ENCODE measurements at regions of chr1 and their contacts with region 1.

Region 1: GRCh38 chr1:211944733-211945500 is 90.4 kb downstream of the INTS7 start:
- DNase-seq: peak; percentile 96
- H3K4me3 Mint-ChIP-seq: peak overlapping the region; percentile 3
- H3K27ac Mint-ChIP-seq: peak overlapping the region; percentile 21
- H3K4me1 Mint-ChIP-seq: peaks cover 14% of the 10 kb centered on the region
- H3K27me3 Mint-ChIP-seq: no peaks in the 10 kb centered on the region
- CTCF ChIP-seq: peak; percentile 96

Region 2: GRCh38 chr1:211680752-211681327 is 264.1 kb before region 1 on chr1:
- CTCF ChIA-PET with region 1: interaction called, 151 read pairs
- POLR2A ChIA-PET with region 1: interaction called, 12 read pairs
- intact Hi-C with region 1: loop called (anchors 1 kb)
- DNase-seq: peak; percentile 92
- H3K4me3 Mint-ChIP-seq: no peak overlapping the region
- H3K27ac Mint-ChIP-seq: peak overlapping the region; percentile 24
- H3K4me1 Mint-ChIP-seq: peaks cover 8% of the 10 kb centered on the region
- H3K27me3 Mint-ChIP-seq: no peaks in the 10 kb centered on the region
- CTCF ChIP-seq: peak; percentile 99

Region 3: DNA sequence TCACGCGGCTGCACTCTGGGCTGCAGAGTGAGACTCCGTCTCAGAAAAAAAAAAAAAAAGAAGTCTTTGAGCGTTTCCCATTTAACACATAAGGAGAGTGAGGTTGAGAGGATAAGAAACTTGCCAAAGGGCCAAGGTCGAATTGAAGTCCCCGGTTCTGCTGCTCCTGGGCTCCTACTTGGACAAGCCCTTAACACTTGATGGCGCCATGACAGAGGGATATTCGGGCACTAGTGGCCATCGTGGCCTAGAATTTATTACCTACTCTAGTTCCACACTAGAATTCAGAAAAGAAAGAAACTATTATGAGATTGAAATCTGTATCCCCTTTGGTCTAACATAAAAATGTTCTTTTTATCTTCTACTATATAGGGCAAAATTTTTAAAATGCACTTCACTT is 203.8 kb before region 1 on chr1:
- CTCF ChIA-PET with region 1: interaction called, 16 read pairs
- POLR2A ChIA-PET with region 1: interaction called, 3 read pairs
- intact Hi-C with region 1: no loop called
- DNase-seq: peak; percentile 31
- H3K4me3 Mint-ChIP-seq: no peak overlapping the region
- H3K27ac Mint-ChIP-seq: no peak overlapping the region
- H3K4me1 Mint-ChIP-seq: peaks cover 23% of the 10 kb centered on the region
- H3K27me3 Mint-ChIP-seq: no peaks in the 10 kb centered on the region
- CTCF ChIP-seq: no peak

Region 4: GRCh38 chr1:211830330-211831142 is 114.4 kb before region 1 on chr1 and contains the start of gene LPGAT1:
- CTCF ChIA-PET with region 1: interaction called, 59 read pairs
- POLR2A ChIA-PET with region 1: interaction called, 10 read pairs
- intact Hi-C with region 1: loop called (anchors 1 kb)
- DNase-seq: peak; percentile 87
- H3K4me3 Mint-ChIP-seq: peak within 1 kb of the TSS; percentile 95
- H3K27ac Mint-ChIP-seq: peak within 1 kb of the TSS; percentile 92
- H3K4me1 Mint-ChIP-seq: peaks cover 33% of the 10 kb centered on the region
- H3K27me3 Mint-ChIP-seq: no peaks in the 10 kb centered on the region
- CTCF ChIP-seq: peak; percentile 91
- total RNA-seq, gene LPGAT1: 76.2 and 82.4 TPM in 2 replicates

Region 5: GRCh38 chr1:211908453-211908852 is 36.5 kb before region 1 on chr1:
- CTCF ChIA-PET with region 1: interaction called, 20 read pairs
- POLR2A ChIA-PET with region 1: no interaction called
- intact Hi-C with region 1: no loop called
- DNase-seq: no peak
- H3K4me3 Mint-ChIP-seq: no peak overlapping the region
- H3K27ac Mint-ChIP-seq: no peak overlapping the region
- H3K4me1 Mint-ChIP-seq: peaks cover 7% of the 10 kb centered on the region
- H3K27me3 Mint-ChIP-seq: peaks cover 15% of the 10 kb centered on the region
- CTCF ChIP-seq: no peak

Region 6: GRCh38 chr1:211985556-211986264 is 40.8 kb after region 1 on chr1:
- CTCF ChIA-PET with region 1: interaction called, 12 read pairs
- POLR2A ChIA-PET with region 1: interaction called, 5 read pairs
- intact Hi-C with region 1: no loop called
- DNase-seq: no peak
- H3K4me3 Mint-ChIP-seq: no peak overlapping the region
- H3K27ac Mint-ChIP-seq: no peak overlapping the region
- H3K4me1 Mint-ChIP-seq: no peaks in the 10 kb centered on the region
- H3K27me3 Mint-ChIP-seq: no peaks in the 10 kb centered on the region
- CTCF ChIP-seq: no peak

Region 7: GRCh38 chr1:212699104-212699624 is 754.2 kb after region 1 on chr1:
- CTCF ChIA-PET with region 1: no interaction called
- POLR2A ChIA-PET with region 1: no interaction called
- intact Hi-C with region 1: no loop called
- DNase-seq: peak; percentile 59
- H3K4me3 Mint-ChIP-seq: peak overlapping the region; percentile 71
- H3K27ac Mint-ChIP-seq: no peak overlapping the region
- H3K4me1 Mint-ChIP-seq: peaks cover 12% of the 10 kb centered on the region
- H3K27me3 Mint-ChIP-seq: peaks cover 62% of the 10 kb centered on the region
- CTCF ChIP-seq: peak; percentile 91